ENCODE measurements at regions of chr1 and their contacts with region 1.

Region 1: GRCh38 chr1:99818063-99818699 is 32.0 kb upstream of the AGL start:
- DNase-seq: no peak
- ATAC-seq: no peak
- H3K4me3 ChIP-seq: no peak overlapping the region
- H3K27ac ChIP-seq: no peak overlapping the region
- H3K4me1 ChIP-seq: no peaks in the 10 kb centered on the region
- H3K27me3 ChIP-seq: peaks cover 8% of the 10 kb centered on the region
- CTCF ChIP-seq: no peak
- POLR2A ChIP-seq: no peak
- RAD21 ChIP-seq: no peak

Region 2: GRCh38 chr1:100028765-100029164 is 210.6 kb after region 1 on chr1:
- CTCF ChIA-PET with region 1: no interaction called
- POLR2A ChIA-PET with region 1: no interaction called
- dilution Hi-C with region 1: no loop called
- in situ Hi-C with region 1: loop called (anchors 10 kb)
- intact Hi-C with region 1: no loop called
- DNase-seq: no peak
- ATAC-seq: no peak
- H3K4me3 ChIP-seq: no peak overlapping the region
- H3K27ac ChIP-seq: no peak overlapping the region
- H3K4me1 ChIP-seq: no peaks in the 10 kb centered on the region
- H3K27me3 ChIP-seq: no peaks in the 10 kb centered on the region
- CTCF ChIP-seq: no peak
- POLR2A ChIP-seq: no peak
- RAD21 ChIP-seq: no peak